ENCODE measurements at regions of chr10 and their contacts with region 1.

Region 1: DNA sequence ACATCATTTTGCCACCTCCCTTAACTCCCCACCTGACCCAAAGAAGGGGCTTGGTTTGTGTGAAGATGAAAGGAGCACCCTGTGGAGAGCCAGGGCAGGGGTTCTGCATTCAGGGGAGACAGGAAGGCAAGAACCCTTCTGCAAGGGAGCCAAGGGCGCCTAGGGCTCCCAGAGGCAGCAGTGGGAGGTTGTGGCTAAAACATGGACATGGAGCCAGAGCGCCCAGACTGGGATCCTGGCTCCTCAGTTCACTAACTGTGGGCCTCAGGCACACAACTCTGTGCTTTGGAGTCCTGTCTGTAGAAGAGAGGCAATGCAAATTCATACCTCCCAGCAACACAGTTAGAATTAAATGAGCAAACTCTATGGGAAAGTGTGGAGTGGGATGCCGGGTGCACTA is 123.1 kb upstream of the MACROH2A2 start:
- DNase-seq: no peak
- H3K4me3 Mint-ChIP-seq: no peak overlapping the region
- H3K27ac Mint-ChIP-seq: no peak overlapping the region
- H3K4me1 Mint-ChIP-seq: no peaks in the 10 kb centered on the region
- H3K27me3 Mint-ChIP-seq: peaks cover 14% of the 10 kb centered on the region
- CTCF ChIP-seq: no peak

Region 2: DNA sequence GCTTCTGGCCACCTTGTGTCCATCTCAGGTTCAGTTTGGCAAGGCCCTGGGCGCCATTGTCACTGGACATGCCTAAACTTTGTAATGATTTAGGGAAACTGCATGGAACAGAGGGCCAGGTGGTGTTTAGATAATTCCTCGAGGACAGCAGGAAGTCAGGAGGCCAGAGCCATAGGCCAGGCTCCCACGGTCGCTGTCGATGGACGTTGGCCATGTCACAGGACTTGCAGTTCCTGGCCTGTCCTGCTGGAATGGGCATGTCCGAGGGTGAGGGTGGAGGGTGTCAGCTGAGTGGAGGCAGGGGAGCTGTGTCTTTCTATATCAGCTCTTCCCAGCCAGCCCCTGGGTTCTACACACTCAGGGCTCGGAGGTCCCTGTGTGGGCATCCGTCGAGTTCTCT is 15.2 kb after region 1 on chr10:
- CTCF ChIA-PET with region 1: no interaction called
- POLR2A ChIA-PET with region 1: no interaction called
- intact Hi-C with region 1: loop called (anchors 1 kb)
- DNase-seq: no peak
- H3K4me3 Mint-ChIP-seq: no peak overlapping the region
- H3K27ac Mint-ChIP-seq: no peak overlapping the region
- H3K4me1 Mint-ChIP-seq: no peaks in the 10 kb centered on the region
- H3K27me3 Mint-ChIP-seq: no peaks in the 10 kb centered on the region
- CTCF ChIP-seq: no peak

Region 3: DNA sequence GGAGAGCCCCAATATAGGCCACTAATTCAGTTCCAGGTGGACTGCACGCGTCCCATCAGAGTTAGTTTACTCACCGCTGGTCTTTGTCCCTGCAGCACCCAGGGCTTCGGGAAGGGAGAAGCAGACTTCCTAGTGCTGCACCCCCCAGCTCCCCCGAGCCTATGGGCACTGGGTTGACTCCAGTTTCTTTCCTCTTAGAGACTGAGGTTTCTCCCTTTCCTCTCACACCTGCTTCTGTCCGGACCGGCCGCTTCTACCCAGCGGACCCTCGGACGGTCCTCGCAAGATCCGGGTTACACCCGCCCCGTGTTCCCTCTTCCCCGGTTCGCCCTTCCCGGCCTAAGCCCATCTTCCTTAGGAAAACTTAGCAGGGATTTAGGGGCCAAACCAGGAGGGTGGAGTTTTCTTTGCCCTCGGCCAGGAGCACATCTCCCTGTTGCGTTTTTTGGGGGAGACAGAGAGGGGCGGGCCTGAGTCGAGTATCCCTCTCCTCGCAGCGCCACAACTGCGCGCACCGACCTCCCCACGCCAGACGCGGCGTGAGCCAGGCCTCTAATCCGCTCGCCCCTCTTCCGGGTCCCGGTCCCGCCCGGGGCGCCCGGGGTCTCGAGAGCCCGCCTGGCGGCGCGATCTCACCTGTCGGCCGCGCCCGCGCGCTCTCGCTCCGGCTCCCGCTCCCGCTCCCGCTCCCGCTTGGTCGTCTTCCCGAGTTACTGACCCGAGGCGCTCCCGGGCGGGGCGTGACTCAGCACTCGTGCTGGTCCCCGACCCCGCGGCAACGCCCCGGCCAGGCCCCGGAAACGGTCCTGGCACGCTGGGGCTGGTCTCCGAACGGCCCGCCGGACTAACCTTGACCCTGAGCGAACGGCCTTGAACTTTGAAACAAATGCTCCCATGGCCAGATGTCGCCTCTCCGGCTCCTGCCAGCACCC is 202.8 kb after region 1 on chr10 and contains the start of gene AIFM2:
- CTCF ChIA-PET with region 1: no interaction called
- POLR2A ChIA-PET with region 1: no interaction called
- intact Hi-C with region 1: no loop called
- DNase-seq: peak; percentile 81
- H3K4me3 Mint-ChIP-seq: peak within 1 kb of the TSS; percentile 81
- H3K27ac Mint-ChIP-seq: peak within 1 kb of the TSS; percentile 91
- H3K4me1 Mint-ChIP-seq: peaks cover 26% of the 10 kb centered on the region
- H3K27me3 Mint-ChIP-seq: no peaks in the 10 kb centered on the region
- CTCF ChIP-seq: no peak
- total RNA-seq, gene AIFM2: 19.2 and 21.9 TPM in 2 replicates

Measured in MCF 10A (cell line).